ENCODE measurements at regions of chr3 and their contacts with region 1.

Region 1: DNA sequence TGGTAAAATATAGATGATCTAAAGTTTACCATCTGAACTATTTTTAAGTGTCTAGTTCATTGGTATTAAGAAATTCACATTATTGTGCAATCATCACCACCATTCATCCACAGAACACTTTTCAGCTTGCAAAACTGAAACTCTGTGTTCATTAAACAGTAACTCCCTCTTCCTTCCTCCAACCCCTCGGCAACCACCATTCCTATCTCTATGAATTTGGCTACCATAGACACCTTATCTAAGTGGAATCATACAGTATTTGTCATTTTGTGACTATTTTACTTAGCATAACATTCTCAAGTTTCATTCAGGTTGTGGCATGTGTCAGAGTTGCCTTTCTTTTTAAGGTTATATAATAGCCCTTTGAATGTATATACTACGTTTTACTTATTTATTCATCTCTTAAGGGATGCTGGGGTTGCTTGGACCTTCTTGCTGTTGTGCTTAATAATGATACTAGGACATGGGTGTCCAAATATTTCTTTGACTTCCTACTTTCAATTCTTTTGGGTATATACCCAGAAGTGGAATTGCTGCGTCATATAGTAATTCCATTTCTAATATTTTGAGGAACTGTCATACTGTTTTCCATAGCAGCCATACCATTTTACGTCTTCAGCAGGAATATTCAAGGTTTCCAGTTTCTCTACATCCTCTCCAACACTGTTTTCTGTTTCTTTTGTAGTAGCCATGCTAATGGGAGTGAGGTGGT is 20.9 kb downstream of the KAT2B start:
- DNase-seq: no peak
- ATAC-seq: peak; percentile 54
- H3K4me3 Mint-ChIP-seq: no peak overlapping the region
- H3K27ac Mint-ChIP-seq: peak overlapping the region; percentile 21
- H3K4me1 Mint-ChIP-seq: peaks cover 39% of the 10 kb centered on the region
- H3K27me3 Mint-ChIP-seq: no peaks in the 10 kb centered on the region
- CTCF ChIP-seq: no peak

Region 2: GRCh38 chr3:20104167-20104661 is 43.1 kb after region 1 on chr3:
- CTCF ChIA-PET with region 1: no interaction called
- POLR2A ChIA-PET with region 1: no interaction called
- intact Hi-C with region 1: loop called (anchors 2 kb)
- DNase-seq: peak; percentile 83
- ATAC-seq: peak; percentile 83
- H3K4me3 Mint-ChIP-seq: peak overlapping the region; percentile 41
- H3K27ac Mint-ChIP-seq: peak overlapping the region; percentile 91
- H3K4me1 Mint-ChIP-seq: peaks cover 55% of the 10 kb centered on the region
- H3K27me3 Mint-ChIP-seq: no peaks in the 10 kb centered on the region
- CTCF ChIP-seq: no peak

Measured in activated CD8-positive, alpha-beta T cell treated with anti-CD3 and anti-CD28 coated beads for 36 hours (primary cell).